B cell (primary cell): ENCODE measurements at regions of chr1 and their contacts with region 1.

Region 1: DNA sequence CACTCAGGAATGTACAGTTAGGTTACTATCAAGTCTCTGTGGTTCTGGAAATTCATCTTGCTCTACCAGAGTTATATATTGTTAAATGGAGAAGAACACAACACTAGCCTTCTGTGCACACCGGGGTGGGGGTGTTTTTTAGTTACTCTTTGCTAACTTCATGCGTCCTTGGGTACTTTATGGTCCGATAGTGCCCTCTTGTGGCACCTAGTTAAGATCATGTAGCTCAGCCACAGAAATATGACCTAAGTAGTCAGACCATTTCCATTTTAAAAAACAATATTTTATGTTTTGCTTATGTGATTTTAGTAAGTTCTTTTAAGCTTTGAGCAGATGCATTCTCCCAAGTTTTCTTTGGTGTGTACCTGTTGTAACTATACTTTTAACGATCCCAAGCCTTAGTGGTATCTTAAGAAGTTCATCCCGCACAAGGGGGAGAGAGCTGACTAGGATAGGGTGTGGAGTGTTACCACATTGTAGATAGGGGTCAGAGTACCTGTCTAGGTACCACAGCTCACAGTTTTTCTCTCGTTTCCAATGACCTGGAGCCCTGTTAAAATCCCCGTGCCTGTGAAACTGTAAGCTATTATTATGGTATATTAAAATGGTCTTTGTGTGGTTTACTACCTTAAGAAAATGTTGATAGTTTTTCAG is 20.6 kb upstream of the SH3D21 start:
- DNase-seq: peak; percentile 89
- ATAC-seq: peak; percentile 92
- H3K4me3 ChIP-seq: no peak overlapping the region
- H3K4me3 Mint-ChIP-seq: no peak overlapping the region
- H3K27ac ChIP-seq: peak overlapping the region in 1 of 2 donors; percentile 34
- H3K27ac Mint-ChIP-seq: peak overlapping the region; percentile 83
- H3K4me1 ChIP-seq: no peaks in the 10 kb centered on the region
- H3K4me1 Mint-ChIP-seq: peaks cover 8% of the 10 kb centered on the region
- H3K27me3 ChIP-seq: no peaks in the 10 kb centered on the region
- H3K27me3 Mint-ChIP-seq: no peaks in the 10 kb centered on the region
- CTCF ChIP-seq: peak; percentile 84

Region 2: GRCh38 chr1:36160949-36161485 is 124.6 kb before region 1 on chr1:
- CTCF ChIA-PET with region 1: interaction called, 135 read pairs
- POLR2A ChIA-PET with region 1: no interaction called
- intact Hi-C with region 1: no loop called
- DNase-seq: peak; percentile 60
- ATAC-seq: peak; percentile 4
- H3K4me3 ChIP-seq: peak overlapping the region; percentile 12 to 51 (median 38)
- H3K4me3 Mint-ChIP-seq: peak overlapping the region; percentile 81
- H3K27ac ChIP-seq: peak overlapping the region; percentile 78 to 88
- H3K27ac Mint-ChIP-seq: peak overlapping the region; percentile 94
- H3K4me1 ChIP-seq: peaks cover 55 to 67% of the 10 kb centered on the region in 2 donors
- H3K4me1 Mint-ChIP-seq: peaks cover 68% of the 10 kb centered on the region
- H3K27me3 ChIP-seq: no peaks in the 10 kb centered on the region
- H3K27me3 Mint-ChIP-seq: no peaks in the 10 kb centered on the region
- CTCF ChIP-seq: no peak

Region 3: GRCh38 chr1:36223993-36224536 is 61.5 kb before region 1 on chr1 and contains the start of gene THRAP3:
- CTCF ChIA-PET with region 1: interaction called, 18 read pairs
- POLR2A ChIA-PET with region 1: no interaction called
- intact Hi-C with region 1: loop called (anchors 1 kb)
- DNase-seq: peak; percentile 100
- ATAC-seq: peak; percentile 88
- H3K4me3 ChIP-seq: peak within 1 kb of the TSS; percentile 77 to 98 (median 91)
- H3K4me3 Mint-ChIP-seq: peak within 1 kb of the TSS; percentile 98
- H3K27ac ChIP-seq: peak within 1 kb of the TSS; percentile 95 to 100
- H3K27ac Mint-ChIP-seq: peak within 1 kb of the TSS; percentile 100
- H3K4me1 ChIP-seq: peaks cover 22 to 43% of the 10 kb centered on the region in 2 donors
- H3K4me1 Mint-ChIP-seq: peaks cover 34% of the 10 kb centered on the region
- H3K27me3 ChIP-seq: no peaks in the 10 kb centered on the region
- H3K27me3 Mint-ChIP-seq: no peaks in the 10 kb centered on the region
- CTCF ChIP-seq: no peak
- total RNA-seq, gene THRAP3: 153 and 159 TPM in 2 replicates

Region 4: GRCh38 chr1:36300526-36300925 is 15.0 kb after region 1 on chr1:
- CTCF ChIA-PET with region 1: interaction called, 10 read pairs
- POLR2A ChIA-PET with region 1: no interaction called
- intact Hi-C with region 1: no loop called
- DNase-seq: no peak
- ATAC-seq: no peak
- H3K4me3 ChIP-seq: no peak overlapping the region
- H3K4me3 Mint-ChIP-seq: no peak overlapping the region
- H3K27ac ChIP-seq: no peak overlapping the region
- H3K27ac Mint-ChIP-seq: peak overlapping the region; percentile 8
- H3K4me1 ChIP-seq: peaks cover 0 to 15% of the 10 kb centered on the region in 2 donors
- H3K4me1 Mint-ChIP-seq: peaks cover 23% of the 10 kb centered on the region
- H3K27me3 ChIP-seq: no peaks in the 10 kb centered on the region
- H3K27me3 Mint-ChIP-seq: no peaks in the 10 kb centered on the region
- CTCF ChIP-seq: no peak